Dorsolateral prefrontal cortex (tissue), 120 donors: ENCODE measurements at regions of chr21 and their contacts with region 1.

Region 1: GRCh38 chr21:16534408-16535101 is 804.8 kb downstream of the USP25 start:
- DNase-seq: peak in 9 of 10 donors; percentile 39 to 71 (median 57)
- H3K4me3 ChIP-seq: peak overlapping the region; percentile 12 to 78 (median 61)
- H3K27ac ChIP-seq: peak overlapping the region; percentile 83 to 98 (median 95)
- H3K27me3 ChIP-seq: no peaks in the 10 kb centered on the region
- CTCF ChIP-seq: peak in 1 of 56 donors; percentile 10

Region 2: DNA sequence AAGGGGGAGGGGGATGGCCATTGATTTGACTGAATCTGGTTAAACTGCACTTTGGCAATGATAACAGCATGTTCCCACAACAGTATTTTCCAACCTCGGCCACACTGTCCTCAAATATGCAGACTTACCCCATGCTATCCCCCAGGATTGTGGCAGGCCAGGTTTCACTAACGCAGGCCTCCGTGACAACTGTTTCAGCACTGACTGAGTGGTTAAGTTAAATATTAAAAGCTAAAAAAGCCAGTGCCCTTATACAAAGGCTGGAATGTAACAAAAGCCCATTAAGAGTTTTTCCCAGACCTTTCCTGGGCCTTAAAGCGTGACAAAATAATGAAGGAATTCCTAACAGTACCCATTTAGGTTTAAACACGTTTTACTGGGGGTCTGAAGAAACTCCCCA is 601.8 kb before region 1 on chr21:
- intact Hi-C with region 1: no loop called
- DNase-seq: no peak
- H3K4me3 ChIP-seq: no peak overlapping the region
- H3K27ac ChIP-seq: no peak overlapping the region
- H3K27me3 ChIP-seq: no peaks in the 10 kb centered on the region
- CTCF ChIP-seq: no peak

Region 3: DNA sequence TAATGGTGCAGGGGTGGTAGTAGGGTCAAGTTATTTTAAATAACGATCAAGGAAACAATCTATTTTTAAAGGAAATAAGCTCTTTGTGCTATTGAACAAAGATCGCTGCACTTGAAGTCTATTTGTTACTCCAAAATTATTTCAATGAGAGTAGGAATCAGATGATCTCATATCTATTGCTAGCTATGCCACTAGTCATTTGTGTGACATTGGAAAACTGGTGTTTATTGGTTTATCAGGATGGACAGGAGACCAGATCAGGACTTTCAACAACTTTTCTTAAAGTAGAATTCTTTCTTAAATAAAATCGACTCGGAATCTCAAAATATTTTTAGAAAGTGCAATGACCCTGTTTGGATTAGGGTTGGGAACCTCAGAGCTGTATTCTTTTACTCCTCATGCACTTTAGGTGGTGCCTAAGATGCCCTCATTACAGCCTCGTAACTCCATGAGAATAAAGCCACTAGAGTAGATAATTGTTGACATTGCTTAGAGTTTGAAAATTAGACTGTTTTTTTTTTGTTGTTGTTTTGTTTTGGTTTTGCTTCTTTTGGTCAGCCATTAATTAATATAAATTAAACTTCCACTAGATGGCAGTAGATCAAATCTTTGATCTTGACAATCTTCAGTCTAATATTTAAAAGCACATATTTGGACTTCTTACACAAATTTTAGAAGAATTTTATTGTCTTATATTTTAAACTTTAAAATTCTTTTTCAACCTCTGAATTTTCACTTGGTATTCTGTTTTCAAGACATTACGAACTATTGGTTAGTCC is 452.3 kb before region 1 on chr21:
- intact Hi-C with region 1: loop called (anchors 5 to 10 kb)
- DNase-seq: no peak
- H3K4me3 ChIP-seq: peak overlapping the region in 56 of 59 donors; percentile 0 to 60 (median 38)
- H3K27ac ChIP-seq: peak overlapping the region; percentile 49 to 99 (median 97)
- H3K27me3 ChIP-seq: no peaks in the 10 kb centered on the region
- CTCF ChIP-seq: peak; percentile 42 to 90 (median 67)

Region 4: GRCh38 chr21:16454399-16454798 is 80.2 kb before region 1 on chr21:
- intact Hi-C with region 1: loop called (anchors 5 to 10 kb)
- DNase-seq: no peak
- H3K4me3 ChIP-seq: no peak overlapping the region
- H3K27ac ChIP-seq: peak overlapping the region in 1 of 59 donors; percentile 36
- H3K27me3 ChIP-seq: no peaks in the 10 kb centered on the region
- CTCF ChIP-seq: peak in 44 of 56 donors; percentile 11 to 57 (median 34)

Region 5: GRCh38 chr21:16514316-16514715 is 20.2 kb before region 1 on chr21:
- intact Hi-C with region 1: loop called in 1 of 2 experiments (anchors 1 kb)
- DNase-seq: no peak
- H3K4me3 ChIP-seq: peak overlapping the region in 1 of 59 donors; percentile 29
- H3K27ac ChIP-seq: peak overlapping the region in 55 of 59 donors; percentile 12 to 95 (median 75)
- H3K27me3 ChIP-seq: no peaks in the 10 kb centered on the region
- CTCF ChIP-seq: peak in 3 of 56 donors; percentile 7 to 21 (median 11)

Region 6: GRCh38 chr21:16588433-16588860 is 53.9 kb after region 1 on chr21:
- intact Hi-C with region 1: loop called (anchors 2 kb)
- DNase-seq: peak; percentile 78 to 95 (median 93)
- H3K4me3 ChIP-seq: peak overlapping the region; percentile 25 to 74 (median 59)
- H3K27ac ChIP-seq: peak overlapping the region; percentile 40 to 98 (median 96)
- H3K27me3 ChIP-seq: no peaks in the 10 kb centered on the region
- CTCF ChIP-seq: peak in 5 of 56 donors; percentile 7 to 29 (median 11)

Region 7: GRCh38 chr21:16663436-16663835 is 128.9 kb after region 1 on chr21:
- intact Hi-C with region 1: no loop called
- DNase-seq: no peak
- H3K4me3 ChIP-seq: no peak overlapping the region
- H3K27ac ChIP-seq: no peak overlapping the region
- H3K27me3 ChIP-seq: no peaks in the 10 kb centered on the region
- CTCF ChIP-seq: no peak